Astrocyte of the cerebellum (primary cell): ENCODE measurements at regions of chr3 and their contacts with region 1.

Region 1: DNA sequence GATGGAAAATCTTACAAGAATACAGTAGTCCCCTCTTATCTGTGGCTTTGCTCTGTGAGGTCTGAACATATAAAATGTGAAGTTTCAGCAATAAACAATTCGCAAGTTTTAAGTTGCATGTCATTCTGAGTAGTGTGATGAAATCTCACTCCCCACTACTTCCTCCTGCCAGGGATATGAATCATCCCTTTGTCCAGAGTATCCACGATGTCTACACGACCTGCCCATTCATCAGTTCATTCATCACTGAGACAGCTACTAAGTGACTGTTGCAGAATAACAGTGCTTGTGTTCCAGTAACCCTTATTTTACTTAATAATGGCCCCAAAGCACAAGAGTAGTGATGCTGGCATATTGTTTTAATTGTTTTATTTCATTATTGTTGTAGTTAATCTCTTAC is 489.2 kb upstream of the UBE2E2 start:
- DNase-seq: peak; percentile 33
- H3K4me3 ChIP-seq: no peak overlapping the region
- CTCF ChIP-seq: no peak

Region 2: DNA sequence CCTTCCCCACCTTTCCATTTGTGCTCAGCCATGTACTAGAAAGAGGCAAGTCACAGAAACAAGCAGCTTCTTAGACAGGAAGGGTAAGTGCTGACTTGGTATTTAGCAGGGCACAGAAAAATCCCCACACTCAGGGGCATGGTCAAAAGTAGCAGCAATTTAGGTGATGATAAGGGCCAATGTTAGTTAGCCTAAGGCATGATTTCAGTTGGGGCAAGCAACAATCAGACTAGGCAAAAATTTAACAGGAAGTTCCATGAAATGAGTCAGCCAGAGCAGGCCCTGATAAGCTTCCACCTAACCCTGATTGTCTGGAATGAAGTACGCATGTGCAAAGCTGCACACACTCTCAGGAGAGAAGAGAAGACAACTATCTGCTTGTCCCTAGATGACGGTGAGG is 65.8 kb after region 1 on chr3:
- in situ Hi-C with region 1: loop called (anchors 10 kb)
- DNase-seq: no peak
- H3K4me3 ChIP-seq: no peak overlapping the region
- CTCF ChIP-seq: no peak